Activated T-helper 2 cell treated with anti-CD3 and anti-CD28 coated beads, Interferon-gamma antibody, Interleukin-2, Interleukin-4, amounts not matched to agents 10 μg/mL and 5 μg/mL and 100 μg/mL, durations not matched to agents 14 hours and 24 hours and 36 hours (primary cell): ENCODE measurements at regions of chr11 and their contacts with region 1.

Region 1: GRCh38 chr11:27698872-27699474 is 1.3 kb downstream of the BDNF start:
- DNase-seq: peak; percentile 28
- H3K4me3 Mint-ChIP-seq: peak overlapping the region; percentile 21
- H3K27ac Mint-ChIP-seq: no peak overlapping the region
- H3K4me1 Mint-ChIP-seq: peaks cover 15% of the 10 kb centered on the region
- H3K27me3 Mint-ChIP-seq: peaks cover 66% of the 10 kb centered on the region

Region 2: GRCh38 chr11:27095059-27095458 is 603.9 kb before region 1 on chr11:
- intact Hi-C with region 1: no loop called
- DNase-seq: no peak
- H3K4me3 Mint-ChIP-seq: no peak overlapping the region
- H3K27ac Mint-ChIP-seq: no peak overlapping the region
- H3K4me1 Mint-ChIP-seq: no peaks in the 10 kb centered on the region
- H3K27me3 Mint-ChIP-seq: no peaks in the 10 kb centered on the region

Region 3: GRCh38 chr11:27720277-27720830 is 21.4 kb after region 1 on chr11:
- intact Hi-C with region 1: loop called (anchors 2 kb)
- DNase-seq: no peak
- H3K4me3 Mint-ChIP-seq: no peak overlapping the region
- H3K27ac Mint-ChIP-seq: no peak overlapping the region
- H3K4me1 Mint-ChIP-seq: peaks cover 3% of the 10 kb centered on the region
- H3K27me3 Mint-ChIP-seq: peaks cover 60% of the 10 kb centered on the region

Region 4: GRCh38 chr11:28090052-28090749 is 391.2 kb after region 1 on chr11:
- intact Hi-C with region 1: no loop called
- DNase-seq: no peak
- H3K4me3 Mint-ChIP-seq: no peak overlapping the region
- H3K27ac Mint-ChIP-seq: no peak overlapping the region
- H3K4me1 Mint-ChIP-seq: peaks cover 3% of the 10 kb centered on the region
- H3K27me3 Mint-ChIP-seq: no peaks in the 10 kb centered on the region

Region 5: GRCh38 chr11:28529540-28530410 is 830.8 kb after region 1 on chr11:
- intact Hi-C with region 1: loop called (anchors 2 kb)
- DNase-seq: no peak
- H3K4me3 Mint-ChIP-seq: no peak overlapping the region
- H3K27ac Mint-ChIP-seq: no peak overlapping the region
- H3K4me1 Mint-ChIP-seq: no peaks in the 10 kb centered on the region
- H3K27me3 Mint-ChIP-seq: no peaks in the 10 kb centered on the region

Region 6: GRCh38 chr11:28701760-28702449 is 1002.9 kb after region 1 on chr11:
- intact Hi-C with region 1: loop called (anchors 2 kb)
- DNase-seq: no peak
- H3K4me3 Mint-ChIP-seq: no peak overlapping the region
- H3K27ac Mint-ChIP-seq: no peak overlapping the region
- H3K4me1 Mint-ChIP-seq: no peaks in the 10 kb centered on the region
- H3K27me3 Mint-ChIP-seq: no peaks in the 10 kb centered on the region

Region 7: GRCh38 chr11:29333993-29334775 is 1635.2 kb after region 1 on chr11:
- intact Hi-C with region 1: loop called (anchors 10 kb)
- DNase-seq: no peak
- H3K4me3 Mint-ChIP-seq: no peak overlapping the region
- H3K27ac Mint-ChIP-seq: no peak overlapping the region
- H3K4me1 Mint-ChIP-seq: no peaks in the 10 kb centered on the region
- H3K27me3 Mint-ChIP-seq: no peaks in the 10 kb centered on the region